WTC11 (cell line): ENCODE measurements at regions of chr9 and their contacts with region 1.

Region 1: GRCh38 chr9:134449221-134449894 is 123.1 kb downstream of the RXRA start:
- DNase-seq: peak; percentile 91
- ATAC-seq: peak; percentile 99
- H3K4me3 Mint-ChIP-seq: no peak overlapping the region
- H3K27ac Mint-ChIP-seq: no peak overlapping the region
- H3K4me1 Mint-ChIP-seq: no peaks in the 10 kb centered on the region
- H3K27me3 Mint-ChIP-seq: peaks cover 3% of the 10 kb centered on the region; the same call in 1 of the 2 replicates
- CTCF ChIP-seq: peak; percentile 58

Region 2: GRCh38 chr9:134463293-134463692 is 13.9 kb after region 1 on chr9:
- CTCF ChIA-PET with region 1: interaction called, 10 read pairs
- POLR2A ChIA-PET with region 1: interaction called, 3 read pairs
- DNase-seq: no peak
- ATAC-seq: no peak
- H3K4me3 Mint-ChIP-seq: no peak overlapping the region
- H3K27ac Mint-ChIP-seq: no peak overlapping the region
- H3K4me1 Mint-ChIP-seq: no peaks in the 10 kb centered on the region
- H3K27me3 Mint-ChIP-seq: no peaks in the 10 kb centered on the region
- CTCF ChIP-seq: no peak

Region 3: GRCh38 chr9:134536101-134536900 is 86.9 kb after region 1 on chr9:
- CTCF ChIA-PET with region 1: no interaction called
- POLR2A ChIA-PET with region 1: no interaction called
- DNase-seq: no peak
- ATAC-seq: no peak
- H3K4me3 Mint-ChIP-seq: no peak overlapping the region
- H3K27ac Mint-ChIP-seq: no peak overlapping the region
- H3K4me1 Mint-ChIP-seq: no peaks in the 10 kb centered on the region
- H3K27me3 Mint-ChIP-seq: no peaks in the 10 kb centered on the region; the same call in 1 of the 2 replicates
- CTCF ChIP-seq: no peak

Region 4: GRCh38 chr9:134641173-134641985 is 192.0 kb after region 1 on chr9 and contains the start of gene COL5A1:
- CTCF ChIA-PET with region 1: interaction called, 10 read pairs
- POLR2A ChIA-PET with region 1: no interaction called
- DNase-seq: peak; percentile 89
- ATAC-seq: peak; percentile 86
- H3K4me3 Mint-ChIP-seq: peak within 1 kb of the TSS; percentile 85
- H3K27ac Mint-ChIP-seq: no peak within 1 kb of the TSS
- H3K4me1 Mint-ChIP-seq: peaks cover 35% of the 10 kb centered on the region
- H3K27me3 Mint-ChIP-seq: peaks cover 15% of the 10 kb centered on the region
- CTCF ChIP-seq: no peak
- total RNA-seq, gene COL5A1: 13.5 to 17.7 TPM (median 16.4 TPM) in 3 replicates

Region 5: DNA sequence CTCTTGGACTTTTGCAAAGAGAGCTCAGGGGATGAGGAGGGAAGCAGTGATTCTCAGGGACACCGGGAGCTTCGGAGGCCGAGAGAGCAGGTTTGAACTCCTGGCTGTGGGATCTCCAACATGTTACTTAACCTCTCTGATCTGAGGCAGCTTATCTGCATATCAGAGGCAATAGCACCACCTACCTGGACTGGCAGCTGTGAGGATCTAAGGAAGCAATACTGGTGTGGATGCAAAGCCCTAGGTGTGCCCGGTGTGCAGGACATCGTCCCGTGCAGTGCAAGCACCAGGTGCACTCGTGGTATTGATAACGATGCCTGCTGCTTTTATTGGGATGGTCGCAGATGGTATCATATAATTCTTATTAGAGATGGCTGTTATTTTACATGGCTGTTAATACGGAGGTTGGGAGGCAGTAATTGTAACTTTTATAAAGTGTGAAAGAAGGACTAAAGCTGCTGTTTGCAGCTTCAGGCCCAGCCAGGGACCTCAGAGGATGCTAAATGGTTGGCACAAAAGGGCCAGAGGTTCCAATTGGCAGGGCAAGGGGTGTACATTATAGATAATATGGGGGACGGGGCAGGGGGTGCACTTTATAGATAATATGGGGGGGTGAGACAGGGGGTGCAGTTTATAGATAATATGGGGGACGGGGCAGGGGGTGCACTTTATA is 207.1 kb after region 1 on chr9:
- CTCF ChIA-PET with region 1: interaction called, 17 read pairs
- POLR2A ChIA-PET with region 1: no interaction called
- DNase-seq: no peak
- ATAC-seq: peak; percentile 51
- H3K4me3 Mint-ChIP-seq: no peak overlapping the region
- H3K27ac Mint-ChIP-seq: no peak overlapping the region
- H3K4me1 Mint-ChIP-seq: peaks cover 9% of the 10 kb centered on the region
- H3K27me3 Mint-ChIP-seq: no peaks in the 10 kb centered on the region; the same call in 1 of the 2 replicates
- CTCF ChIP-seq: no peak

Region 6: GRCh38 chr9:134738869-134739659 is 289.7 kb after region 1 on chr9:
- CTCF ChIA-PET with region 1: interaction called, 11 read pairs
- POLR2A ChIA-PET with region 1: no interaction called
- DNase-seq: peak; percentile 83
- ATAC-seq: peak; percentile 88
- H3K4me3 Mint-ChIP-seq: no peak overlapping the region
- H3K27ac Mint-ChIP-seq: peak overlapping the region; percentile 58
- H3K4me1 Mint-ChIP-seq: peaks cover 7% of the 10 kb centered on the region
- H3K27me3 Mint-ChIP-seq: no peaks in the 10 kb centered on the region
- CTCF ChIP-seq: peak; percentile 86